PC-3 (cell line): ENCODE measurements at regions of chr5 and their contacts with region 1.

Region 1: DNA sequence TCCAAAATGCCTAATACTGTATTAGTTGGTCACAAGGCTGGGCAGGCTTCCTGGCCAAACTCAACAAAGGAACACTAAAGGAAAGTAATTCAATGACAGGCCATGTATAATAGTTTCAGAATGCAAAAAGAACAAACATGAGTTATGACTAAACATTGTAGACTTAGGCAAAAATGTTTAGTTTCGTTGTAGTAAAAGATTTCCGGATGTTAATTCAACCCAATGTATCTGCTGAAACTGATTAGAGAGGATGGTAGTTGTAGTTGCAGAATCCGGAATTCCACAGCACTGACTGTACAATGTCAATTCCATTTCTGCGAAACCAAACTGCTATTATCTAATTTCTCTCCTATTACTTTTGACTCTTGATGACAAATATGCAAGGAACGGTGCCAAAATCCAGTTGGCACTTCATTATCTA is 117.9 kb upstream of the FST start:
- DNase-seq: peak; percentile 97
- ATAC-seq: peak; percentile 57
- H3K4me3 ChIP-seq: no peak overlapping the region
- H3K27ac ChIP-seq: peak overlapping the region; percentile 100
- H3K4me1 ChIP-seq: peaks cover 85% of the 10 kb centered on the region
- H3K27me3 ChIP-seq: no peaks in the 10 kb centered on the region
- CTCF ChIP-seq: no peak

Region 2: GRCh38 chr5:53262348-53262970 is 100.1 kb before region 1 on chr5:
- CTCF ChIA-PET with region 1: no interaction called
- POLR2A ChIA-PET with region 1: no interaction called
- intact Hi-C with region 1: loop called (anchors 2 kb)
- DNase-seq: peak; percentile 69
- ATAC-seq: peak; percentile 78
- H3K4me3 ChIP-seq: no peak overlapping the region
- H3K27ac ChIP-seq: peak overlapping the region; percentile 83
- H3K4me1 ChIP-seq: peaks cover 22% of the 10 kb centered on the region
- H3K27me3 ChIP-seq: no peaks in the 10 kb centered on the region
- CTCF ChIP-seq: peak; percentile 73

Region 3: GRCh38 chr5:53392073-53392472 is 29.5 kb after region 1 on chr5:
- CTCF ChIA-PET with region 1: no interaction called
- POLR2A ChIA-PET with region 1: no interaction called
- intact Hi-C with region 1: loop called (anchors 2 kb)
- DNase-seq: no peak
- ATAC-seq: no peak
- H3K4me3 ChIP-seq: no peak overlapping the region
- H3K27ac ChIP-seq: no peak overlapping the region
- H3K4me1 ChIP-seq: no peaks in the 10 kb centered on the region
- H3K27me3 ChIP-seq: no peaks in the 10 kb centered on the region
- CTCF ChIP-seq: no peak

Region 4: DNA sequence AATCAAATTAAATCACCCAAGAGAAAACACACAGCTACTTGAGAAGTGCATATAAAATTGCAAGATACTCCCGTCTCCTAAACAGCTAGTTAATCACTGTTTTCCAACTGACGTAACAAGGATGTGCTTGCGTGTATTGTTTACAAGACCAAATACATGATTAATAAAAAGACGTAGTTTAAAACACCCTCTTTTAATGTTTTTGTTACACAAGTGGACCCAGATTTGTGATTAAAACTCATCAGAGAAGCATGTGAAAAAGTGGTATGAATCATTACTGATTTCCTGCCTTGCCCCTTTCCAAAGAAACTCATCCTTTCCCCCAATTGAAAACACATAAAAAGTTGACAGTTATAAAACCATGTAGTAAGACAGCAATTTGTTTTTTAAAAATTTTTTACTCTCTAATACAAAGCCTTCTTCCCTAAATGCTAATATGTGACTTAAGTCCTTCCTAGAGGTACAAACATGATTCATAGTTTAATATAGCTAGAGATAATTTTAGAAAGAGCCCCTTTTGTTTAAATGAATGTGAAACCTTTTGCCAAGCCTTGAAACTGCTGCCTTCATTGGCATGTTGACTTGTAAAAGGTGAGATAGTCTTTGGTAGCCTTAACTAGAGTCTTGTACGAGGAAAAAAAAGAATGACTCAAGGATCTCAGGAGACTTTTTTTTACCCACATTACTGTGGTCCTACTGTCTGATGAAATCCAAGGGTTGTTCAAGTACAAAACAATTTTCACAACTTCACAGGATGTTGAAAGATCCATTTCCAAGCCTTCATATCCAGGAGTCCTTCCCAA is 56.5 kb after region 1 on chr5:
- CTCF ChIA-PET with region 1: interaction called, 3 read pairs
- POLR2A ChIA-PET with region 1: no interaction called
- intact Hi-C with region 1: loop called (anchors 1 kb)
- DNase-seq: peak; percentile 91
- ATAC-seq: peak; percentile 72
- H3K4me3 ChIP-seq: no peak overlapping the region
- H3K27ac ChIP-seq: peak overlapping the region; percentile 100
- H3K4me1 ChIP-seq: peaks cover 60% of the 10 kb centered on the region
- H3K27me3 ChIP-seq: no peaks in the 10 kb centered on the region
- CTCF ChIP-seq: no peak

Region 5: DNA sequence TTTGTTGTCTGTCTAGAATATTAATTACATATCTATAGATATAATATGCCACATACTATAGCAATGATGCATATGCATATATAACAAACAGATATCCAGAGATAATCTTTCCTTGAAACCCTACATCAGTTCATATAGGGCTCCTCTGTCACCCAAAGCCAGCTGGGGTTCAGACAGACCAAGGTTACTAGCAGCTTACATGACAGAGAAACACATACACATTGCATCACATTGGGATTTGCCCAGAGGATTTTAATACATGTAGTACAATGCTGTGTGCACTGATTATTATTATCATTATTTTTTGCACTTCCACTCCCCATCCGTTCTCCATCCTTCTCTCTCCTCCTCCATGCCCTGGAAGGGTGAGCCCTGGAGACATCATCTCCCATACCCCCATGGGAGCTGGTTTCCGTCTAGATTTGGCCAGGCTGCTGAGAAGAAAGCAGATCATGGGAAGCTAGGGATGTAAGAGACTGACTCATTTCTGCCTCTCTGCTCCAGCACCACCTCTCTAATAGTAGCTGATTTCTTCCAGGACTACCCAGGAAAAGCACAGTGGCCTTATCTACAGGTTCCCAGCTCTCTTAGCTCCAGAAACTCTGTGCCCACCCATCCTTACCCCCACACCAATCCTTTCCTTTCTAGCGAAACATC is 141.2 kb after region 1 on chr5:
- CTCF ChIA-PET with region 1: no interaction called
- POLR2A ChIA-PET with region 1: no interaction called
- intact Hi-C with region 1: no loop called
- DNase-seq: no peak
- ATAC-seq: no peak
- H3K4me3 ChIP-seq: no peak overlapping the region
- H3K27ac ChIP-seq: no peak overlapping the region
- H3K4me1 ChIP-seq: no peaks in the 10 kb centered on the region
- H3K27me3 ChIP-seq: no peaks in the 10 kb centered on the region
- CTCF ChIP-seq: no peak

Region 6: DNA sequence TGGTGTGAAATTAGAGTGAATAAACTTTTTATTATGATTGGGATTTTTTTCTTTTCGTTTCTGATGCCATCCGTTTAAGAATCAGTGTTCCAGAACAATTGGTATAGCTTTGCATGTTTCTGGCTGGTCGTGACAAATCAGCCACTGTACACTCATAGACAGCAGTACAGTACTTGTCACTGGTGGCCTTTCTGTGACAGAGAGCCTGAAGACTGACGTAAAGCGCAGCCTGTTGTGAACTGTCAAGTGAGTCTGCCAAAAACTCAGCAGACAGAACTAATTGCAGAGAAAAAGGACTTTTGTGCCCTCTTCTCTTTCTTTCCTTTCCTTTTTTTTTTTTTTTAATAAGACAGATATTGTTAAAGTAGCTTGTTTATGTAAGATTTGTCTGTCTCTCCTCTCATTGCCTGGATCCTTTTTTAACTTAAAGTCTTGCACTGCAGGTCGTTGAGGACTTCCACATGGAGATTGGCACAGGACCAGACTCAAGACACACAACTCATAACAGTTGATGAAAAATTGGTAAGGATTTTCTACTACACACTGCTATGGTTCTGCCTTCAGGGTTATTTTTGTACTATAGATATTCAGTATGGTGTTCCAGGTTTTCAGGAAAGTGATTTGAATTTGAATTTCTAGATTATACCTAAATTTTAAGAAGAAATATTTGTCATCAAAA is 240.6 kb after region 1 on chr5:
- CTCF ChIA-PET with region 1: no interaction called
- POLR2A ChIA-PET with region 1: no interaction called
- intact Hi-C with region 1: loop called (anchors 10 kb)
- DNase-seq: no peak
- ATAC-seq: no peak
- H3K4me3 ChIP-seq: no peak overlapping the region
- H3K27ac ChIP-seq: peak overlapping the region; percentile 55
- H3K4me1 ChIP-seq: peaks cover 31% of the 10 kb centered on the region
- H3K27me3 ChIP-seq: no peaks in the 10 kb centered on the region
- CTCF ChIP-seq: no peak